GM10248 (cell line): ENCODE measurements at regions of chr11 and their contacts with region 1.

Region 1: GRCh38 chr11:2930704-2931428 is 1.6 kb upstream of the PHLDA2 start:
- DNase-seq: peak; percentile 82
- CTCF ChIP-seq: peak; percentile 72

Region 2: GRCh38 chr11:2621894-2622293 is 309.0 kb before region 1 on chr11:
- CTCF ChIA-PET with region 1: no interaction called
- POLR2A ChIA-PET with region 1: no interaction called
- DNase-seq: no peak
- CTCF ChIP-seq: no peak

Region 3: DNA sequence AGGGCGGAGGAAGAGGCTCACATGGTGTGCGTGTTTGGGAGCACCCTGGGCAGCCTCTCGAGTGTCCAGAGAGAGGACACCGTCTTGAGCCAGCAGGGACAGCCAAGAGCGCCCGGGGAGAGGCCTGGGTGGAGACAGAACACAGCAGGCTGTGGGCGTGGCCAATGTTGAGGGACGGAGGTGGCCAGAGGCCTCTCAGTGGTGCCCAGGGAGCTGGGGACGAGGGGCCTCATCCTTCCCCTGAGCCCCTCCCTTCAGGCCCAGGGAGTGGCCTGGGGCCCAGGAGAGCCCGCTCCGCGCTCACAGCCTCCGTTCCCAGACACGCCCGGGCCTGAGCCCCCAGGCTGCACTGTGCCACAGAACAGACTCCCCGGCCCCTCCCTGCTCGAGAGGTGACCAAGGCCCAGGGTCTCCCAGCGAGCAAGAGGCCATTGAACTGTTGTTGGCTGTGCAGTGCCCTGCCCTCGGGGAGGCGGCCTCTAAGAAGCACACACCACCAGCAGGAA is 93.7 kb before region 1 on chr11:
- CTCF ChIA-PET with region 1: no interaction called
- POLR2A ChIA-PET with region 1: no interaction called
- DNase-seq: no peak
- CTCF ChIP-seq: no peak

Region 4: GRCh38 chr11:2881076-2881980 is 49.5 kb before region 1 on chr11:
- CTCF ChIA-PET with region 1: no interaction called
- POLR2A ChIA-PET with region 1: no interaction called
- DNase-seq: no peak
- CTCF ChIP-seq: no peak

Region 5: DNA sequence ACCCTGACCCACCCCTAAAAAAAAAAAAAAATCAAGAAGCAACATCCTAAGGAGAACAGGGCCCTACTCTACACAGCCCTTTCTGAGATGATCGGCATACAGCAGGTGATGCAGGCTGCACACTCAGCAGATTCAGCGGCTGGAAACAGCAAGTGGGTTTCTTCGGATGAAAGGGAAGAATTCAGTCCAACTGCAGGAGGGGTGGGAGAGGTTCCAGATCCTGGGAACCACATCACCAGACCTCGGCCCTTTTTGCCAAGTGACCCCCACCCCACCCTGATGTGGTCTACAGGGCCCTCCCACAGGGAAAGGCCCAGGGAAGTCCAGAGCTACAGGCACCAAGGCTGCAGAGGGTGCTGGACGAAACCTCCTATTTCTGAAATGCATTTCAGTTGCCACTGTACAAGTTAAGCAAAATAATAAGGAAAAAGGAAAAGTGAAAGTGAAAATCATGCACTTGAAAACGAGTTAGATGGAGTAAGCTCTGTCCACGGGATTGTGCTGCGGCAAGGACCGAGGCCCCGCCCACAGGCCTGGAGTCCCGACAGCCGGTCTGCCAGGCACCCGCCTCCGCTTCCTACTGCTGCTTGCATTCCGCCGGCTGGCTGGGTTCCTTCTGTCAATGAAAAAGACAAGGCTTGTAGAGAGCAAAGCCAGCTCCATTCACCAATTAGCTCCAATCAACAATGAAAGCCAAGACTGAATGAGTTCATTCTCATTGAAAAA is 14.3 kb after region 1 on chr11:
- CTCF ChIA-PET with region 1: interaction called, 10 read pairs
- POLR2A ChIA-PET with region 1: no interaction called
- DNase-seq: peak; percentile 18
- CTCF ChIP-seq: no peak

Region 6: DNA sequence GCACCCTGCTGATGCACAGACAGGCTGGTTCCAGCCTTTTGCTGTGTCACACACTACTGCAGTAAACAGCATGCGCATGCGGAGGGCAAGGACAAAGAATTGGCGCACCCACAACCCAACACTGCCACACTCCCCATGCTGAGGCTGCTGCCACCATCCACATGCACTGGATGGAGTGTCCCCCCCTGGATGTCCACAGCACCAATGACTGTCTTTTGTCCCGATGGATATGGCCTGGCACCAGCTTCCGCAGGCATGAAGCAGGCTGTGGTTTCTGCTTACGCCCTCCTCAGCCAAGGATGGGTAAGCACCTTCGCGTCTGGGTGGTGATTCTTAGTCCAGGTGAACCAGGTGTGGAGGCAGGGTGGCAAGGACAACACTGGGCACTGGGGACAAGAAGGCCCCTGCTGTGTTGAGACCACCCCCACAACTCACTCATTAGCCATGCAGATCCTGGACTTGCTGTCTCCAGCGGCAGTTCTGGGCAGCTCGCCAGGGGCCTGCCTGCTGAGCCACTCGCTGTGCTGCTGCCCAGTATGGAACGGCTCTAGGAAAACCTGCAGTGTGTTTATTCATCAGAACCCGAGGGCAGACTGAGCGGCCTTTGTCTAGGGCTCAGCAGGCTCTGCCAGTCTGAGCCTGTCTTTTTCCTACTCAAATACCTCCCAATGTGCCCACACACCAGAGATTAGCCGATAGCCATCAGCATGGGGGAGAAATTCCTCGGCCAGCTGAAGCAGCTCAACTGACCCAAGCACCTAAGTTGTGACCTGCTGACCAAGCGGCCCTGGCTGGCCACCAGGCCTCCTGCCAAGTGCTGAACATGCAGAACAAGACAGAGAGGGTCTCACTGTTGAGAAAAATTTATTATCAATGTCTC is 69.5 kb after region 1 on chr11:
- CTCF ChIA-PET with region 1: no interaction called
- POLR2A ChIA-PET with region 1: no interaction called
- DNase-seq: no peak
- CTCF ChIP-seq: no peak